CD4-positive, alpha-beta T cell (primary cell): ENCODE measurements at regions of chr10 and their contacts with region 1.

Region 1: GRCh38 chr10:22420787-22421517 is 75.7 kb downstream of the SPAG6 start:
- DNase-seq: peak in 4 of 14 experiments; percentile 14 to 59 (median 56)
- ATAC-seq: peak; percentile 43
- H3K4me3 ChIP-seq: no peak overlapping the region
- H3K4me3 Mint-ChIP-seq: no peak overlapping the region
- H3K27ac ChIP-seq: no peak overlapping the region
- H3K27ac Mint-ChIP-seq: no peak overlapping the region
- H3K4me1 ChIP-seq: no peaks in the 10 kb centered on the region
- H3K4me1 Mint-ChIP-seq: no peaks in the 10 kb centered on the region
- H3K27me3 ChIP-seq: no peaks in the 10 kb centered on the region
- H3K27me3 Mint-ChIP-seq: no peaks in the 10 kb centered on the region
- CTCF ChIP-seq: peak; percentile 52

Region 2: DNA sequence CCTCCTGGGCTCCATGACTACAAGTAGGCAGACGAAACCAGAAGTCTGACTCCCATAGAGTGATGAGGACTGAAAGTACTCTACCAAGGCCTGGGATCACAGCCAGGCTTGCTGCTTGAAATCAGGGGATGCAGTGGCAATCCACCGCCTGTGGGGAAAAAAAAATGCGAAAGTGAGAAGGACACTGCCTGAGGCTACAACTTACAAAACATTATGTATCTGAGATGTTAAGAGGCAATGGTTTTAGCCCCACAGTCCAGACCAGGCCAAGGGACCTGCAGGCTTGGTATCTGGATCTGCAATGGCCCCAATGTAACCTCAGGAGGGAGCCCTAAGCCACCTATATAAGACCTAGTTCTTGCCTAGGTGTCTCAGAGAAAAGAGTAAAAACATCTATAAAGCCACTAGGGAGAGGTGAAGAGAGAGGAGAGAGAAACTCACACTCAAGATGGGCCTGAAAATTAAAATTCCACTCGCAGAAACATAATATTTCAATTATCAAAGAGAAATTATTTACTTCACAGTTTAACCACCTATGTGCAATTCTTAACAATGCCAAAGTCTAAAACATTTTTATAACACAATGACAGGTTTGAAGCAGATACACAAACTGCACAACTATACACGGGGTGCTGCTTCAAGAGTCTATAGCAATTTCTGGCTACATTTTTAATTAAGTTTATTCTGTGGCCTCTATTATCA is 431.3 kb before region 1 on chr10:
- CTCF ChIA-PET with region 1: no interaction called
- POLR2A ChIA-PET with region 1: no interaction called
- intact Hi-C with region 1: loop called (anchors 1 to 5 kb)
- DNase-seq: peak in 9 of 14 experiments; percentile 3 to 67 (median 19)
- ATAC-seq: peak; percentile 87
- H3K4me3 ChIP-seq: no peak overlapping the region
- H3K4me3 Mint-ChIP-seq: no peak overlapping the region
- H3K27ac ChIP-seq: no peak overlapping the region
- H3K27ac Mint-ChIP-seq: no peak overlapping the region
- H3K4me1 ChIP-seq: peaks cover 3% of the 10 kb centered on the region
- H3K4me1 Mint-ChIP-seq: peaks cover 10% of the 10 kb centered on the region
- H3K27me3 ChIP-seq: no peaks in the 10 kb centered on the region
- H3K27me3 Mint-ChIP-seq: no peaks in the 10 kb centered on the region
- CTCF ChIP-seq: peak; percentile 57

Region 3: GRCh38 chr10:22010973-22011408 is 410.0 kb before region 1 on chr10:
- CTCF ChIA-PET with region 1: no interaction called
- POLR2A ChIA-PET with region 1: no interaction called
- intact Hi-C with region 1: loop called (anchors 1 to 2 kb)
- DNase-seq: peak in 3 of 14 experiments; percentile 44 to 57 (median 51)
- ATAC-seq: peak; percentile 34
- H3K4me3 ChIP-seq: no peak overlapping the region
- H3K4me3 Mint-ChIP-seq: no peak overlapping the region
- H3K27ac ChIP-seq: no peak overlapping the region
- H3K27ac Mint-ChIP-seq: no peak overlapping the region
- H3K4me1 ChIP-seq: no peaks in the 10 kb centered on the region
- H3K4me1 Mint-ChIP-seq: peaks cover 4% of the 10 kb centered on the region
- H3K27me3 ChIP-seq: no peaks in the 10 kb centered on the region
- H3K27me3 Mint-ChIP-seq: no peaks in the 10 kb centered on the region
- CTCF ChIP-seq: peak; percentile 64

Region 4: GRCh38 chr10:22244001-22244400 is 177.0 kb before region 1 on chr10:
- CTCF ChIA-PET with region 1: no interaction called
- POLR2A ChIA-PET with region 1: no interaction called
- intact Hi-C with region 1: loop called in 1 of 2 experiments (anchors 5 kb)
- DNase-seq: peak in 4 of 14 experiments; percentile 10 to 38 (median 18)
- ATAC-seq: no peak
- H3K4me3 ChIP-seq: no peak overlapping the region
- H3K4me3 Mint-ChIP-seq: no peak overlapping the region
- H3K27ac ChIP-seq: no peak overlapping the region
- H3K27ac Mint-ChIP-seq: no peak overlapping the region
- H3K4me1 ChIP-seq: no peaks in the 10 kb centered on the region
- H3K4me1 Mint-ChIP-seq: peaks cover 19% of the 10 kb centered on the region
- H3K27me3 ChIP-seq: peaks cover 7% of the 10 kb centered on the region in 2 experiments
- H3K27me3 Mint-ChIP-seq: peaks cover 6% of the 10 kb centered on the region
- CTCF ChIP-seq: no peak

Region 5: DNA sequence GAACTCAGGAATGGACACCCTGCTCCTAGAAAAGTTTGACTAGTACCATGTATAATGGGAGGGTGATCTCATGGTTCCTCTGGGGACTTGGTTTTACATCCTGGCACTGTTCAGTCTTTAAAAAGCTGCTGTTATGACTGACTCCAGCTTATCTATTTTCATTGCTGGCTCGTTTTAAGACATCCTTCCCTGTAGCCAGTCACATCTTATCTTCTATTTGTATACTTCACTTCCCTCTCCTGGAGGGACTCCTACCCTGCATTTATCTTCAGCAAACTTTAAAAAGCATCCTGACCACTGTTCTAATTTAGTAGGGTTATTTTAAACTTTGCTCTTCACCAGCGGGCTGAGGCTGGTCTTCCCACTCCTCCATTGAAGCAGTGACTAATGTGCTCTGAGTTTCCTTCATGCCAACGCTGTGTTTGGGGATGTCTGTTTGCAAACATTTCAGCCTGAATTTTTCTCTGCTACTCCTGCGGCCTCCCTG is 434.0 kb after region 1 on chr10:
- CTCF ChIA-PET with region 1: no interaction called
- POLR2A ChIA-PET with region 1: no interaction called
- intact Hi-C with region 1: no loop called
- DNase-seq: no peak
- ATAC-seq: no peak
- H3K4me3 ChIP-seq: no peak overlapping the region
- H3K4me3 Mint-ChIP-seq: no peak overlapping the region
- H3K27ac ChIP-seq: no peak overlapping the region
- H3K27ac Mint-ChIP-seq: no peak overlapping the region
- H3K4me1 ChIP-seq: no peaks in the 10 kb centered on the region
- H3K4me1 Mint-ChIP-seq: no peaks in the 10 kb centered on the region
- H3K27me3 ChIP-seq: no peaks in the 10 kb centered on the region
- H3K27me3 Mint-ChIP-seq: no peaks in the 10 kb centered on the region
- CTCF ChIP-seq: no peak